ENCODE measurements at regions of chr6 and their contacts with region 1.

Region 1: DNA sequence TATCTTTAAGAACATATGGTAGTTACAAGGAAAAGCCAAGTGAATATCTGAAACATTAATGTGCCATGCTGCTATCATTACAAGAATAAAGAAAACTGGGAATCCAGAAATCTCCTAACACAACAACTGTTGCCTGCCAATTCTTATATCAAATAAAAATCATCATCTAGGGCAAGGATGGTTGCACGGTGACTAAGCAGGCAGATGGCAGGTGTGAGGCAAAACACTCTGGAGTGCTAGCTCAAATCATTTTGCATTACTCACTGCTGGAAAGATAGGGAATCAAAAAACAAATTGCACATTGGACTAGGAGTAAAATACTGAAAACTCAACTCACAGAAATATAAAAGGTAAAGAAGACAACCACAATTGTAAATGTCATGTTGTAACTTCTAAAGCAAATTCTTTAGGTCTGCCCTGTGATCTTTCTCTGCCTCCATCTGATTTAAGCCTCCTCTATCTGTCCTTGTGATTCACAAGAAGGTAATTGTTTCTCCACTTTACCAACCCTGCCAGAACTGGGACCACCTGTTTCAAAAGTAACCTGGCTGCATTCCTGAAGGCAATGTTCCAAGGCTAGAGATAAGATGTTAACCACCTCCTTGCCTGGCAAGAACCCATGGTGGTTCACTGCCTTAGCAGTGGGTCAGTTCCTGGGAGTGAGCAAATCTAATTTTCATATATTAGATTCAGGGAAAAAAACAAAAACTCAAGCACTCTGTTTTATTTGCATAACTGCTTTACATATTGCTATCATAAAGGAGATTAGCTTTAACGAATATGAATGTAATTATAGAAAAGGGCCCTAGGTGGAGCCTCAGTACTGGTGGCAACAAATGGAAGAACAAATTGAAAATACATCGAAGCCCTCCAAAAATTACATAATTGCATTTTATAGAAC is 33.1 kb upstream of the LCA5 start:
- DNase-seq: peak; percentile 16
- H3K4me3 ChIP-seq: peak overlapping the region in 1 of 2 donors; percentile 1
- H3K27ac ChIP-seq: no peak overlapping the region
- H3K4me1 ChIP-seq: no peaks in the 10 kb centered on the region
- H3K27me3 ChIP-seq: no peaks in the 10 kb centered on the region
- CTCF ChIP-seq: peak; percentile 25 to 83 (median 70)
- POLR2A ChIP-seq: no peak

Region 2: DNA sequence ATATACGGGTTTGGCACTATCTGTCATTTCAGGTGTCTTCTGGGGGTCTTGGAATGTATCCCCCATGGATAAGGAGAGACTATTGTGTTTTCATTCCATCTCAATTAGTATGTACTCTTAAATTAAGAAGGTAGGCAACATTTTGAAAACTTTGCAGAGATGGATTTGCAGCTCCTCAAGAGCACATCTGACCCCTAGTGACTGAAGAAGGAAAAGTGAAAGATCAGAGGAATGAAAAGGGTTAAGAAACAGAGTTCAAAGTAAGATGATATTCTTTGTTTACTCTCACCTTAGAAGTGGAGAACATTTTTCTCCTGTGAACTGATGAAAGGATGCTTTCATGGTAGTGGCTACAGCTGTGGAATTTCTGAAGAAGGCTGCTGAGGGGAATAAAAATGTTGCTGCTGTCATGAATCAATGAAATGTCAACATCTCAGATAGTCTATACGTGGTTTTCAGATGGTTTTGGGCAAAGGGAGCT is 102.3 kb after region 1 on chr6:
- intact Hi-C with region 1: loop called (anchors 5 kb)
- DNase-seq: no peak
- H3K4me3 ChIP-seq: no peak overlapping the region
- H3K27ac ChIP-seq: peak overlapping the region in 1 of 2 donors; percentile 53
- H3K4me1 ChIP-seq: peaks cover 5% of the 10 kb centered on the region
- H3K27me3 ChIP-seq: no peaks in the 10 kb centered on the region
- CTCF ChIP-seq: peak; percentile 13 to 62 (median 42)
- POLR2A ChIP-seq: no peak

Region 3: GRCh38 chr6:79713701-79714322 is 143.4 kb after region 1 on chr6:
- intact Hi-C with region 1: loop called (anchors 2 kb)
- DNase-seq: peak; percentile 32
- H3K4me3 ChIP-seq: no peak overlapping the region
- H3K27ac ChIP-seq: no peak overlapping the region
- H3K4me1 ChIP-seq: peaks cover 2% of the 10 kb centered on the region
- H3K27me3 ChIP-seq: no peaks in the 10 kb centered on the region
- CTCF ChIP-seq: peak in 3 of 4 experiments; percentile 41 to 60 (median 55)
- POLR2A ChIP-seq: no peak

Region 4: GRCh38 chr6:79813854-79814709 is 243.7 kb after region 1 on chr6:
- intact Hi-C with region 1: loop called (anchors 5 kb)
- DNase-seq: peak; percentile 58
- H3K4me3 ChIP-seq: no peak overlapping the region
- H3K27ac ChIP-seq: no peak overlapping the region
- H3K4me1 ChIP-seq: no peaks in the 10 kb centered on the region
- H3K27me3 ChIP-seq: no peaks in the 10 kb centered on the region
- CTCF ChIP-seq: peak; percentile 56 to 81 (median 71)
- POLR2A ChIP-seq: no peak